ENCODE measurements at regions of chr7 and their contacts with region 1.

Region 1: DNA sequence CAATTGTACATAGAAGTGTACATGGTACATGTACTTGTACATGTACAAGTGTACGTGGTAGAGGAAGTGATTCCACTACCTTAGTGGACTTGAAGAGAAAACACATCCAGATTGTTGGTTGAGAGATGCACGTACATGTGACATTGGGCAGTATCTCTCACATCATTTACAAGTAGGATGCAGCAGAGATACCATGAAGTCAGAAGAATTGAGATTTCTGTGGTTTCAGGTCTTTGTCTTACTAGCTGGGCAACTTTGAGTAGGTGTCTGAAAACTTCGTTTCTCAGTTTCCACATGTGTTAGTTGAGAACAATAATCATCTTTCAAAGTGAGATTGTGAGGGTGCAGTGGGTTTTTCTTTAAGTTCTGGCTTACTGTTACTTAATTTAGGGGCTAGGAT is 21.5 kb downstream of the CLDN12 start:
- DNase-seq: no peak
- H3K4me3 Mint-ChIP-seq: peak overlapping the region; percentile 26
- H3K27ac Mint-ChIP-seq: peak overlapping the region; percentile 61
- H3K4me1 Mint-ChIP-seq: peaks cover 18% of the 10 kb centered on the region
- H3K27me3 Mint-ChIP-seq: no peaks in the 10 kb centered on the region

Region 2: GRCh38 chr7:90155206-90155605 is 269.5 kb before region 1 on chr7:
- intact Hi-C with region 1: loop called (anchors 1 kb)
- DNase-seq: no peak
- H3K4me3 Mint-ChIP-seq: peak overlapping the region; percentile 67
- H3K27ac Mint-ChIP-seq: no peak overlapping the region
- H3K4me1 Mint-ChIP-seq: peaks cover 4% of the 10 kb centered on the region
- H3K27me3 Mint-ChIP-seq: peaks cover 22% of the 10 kb centered on the region

Region 3: GRCh38 chr7:90262438-90262837 is 162.3 kb before region 1 on chr7:
- intact Hi-C with region 1: loop called (anchors 2 kb)
- DNase-seq: no peak
- H3K4me3 Mint-ChIP-seq: no peak overlapping the region
- H3K27ac Mint-ChIP-seq: no peak overlapping the region
- H3K4me1 Mint-ChIP-seq: no peaks in the 10 kb centered on the region
- H3K27me3 Mint-ChIP-seq: peaks cover 9% of the 10 kb centered on the region

Region 4: DNA sequence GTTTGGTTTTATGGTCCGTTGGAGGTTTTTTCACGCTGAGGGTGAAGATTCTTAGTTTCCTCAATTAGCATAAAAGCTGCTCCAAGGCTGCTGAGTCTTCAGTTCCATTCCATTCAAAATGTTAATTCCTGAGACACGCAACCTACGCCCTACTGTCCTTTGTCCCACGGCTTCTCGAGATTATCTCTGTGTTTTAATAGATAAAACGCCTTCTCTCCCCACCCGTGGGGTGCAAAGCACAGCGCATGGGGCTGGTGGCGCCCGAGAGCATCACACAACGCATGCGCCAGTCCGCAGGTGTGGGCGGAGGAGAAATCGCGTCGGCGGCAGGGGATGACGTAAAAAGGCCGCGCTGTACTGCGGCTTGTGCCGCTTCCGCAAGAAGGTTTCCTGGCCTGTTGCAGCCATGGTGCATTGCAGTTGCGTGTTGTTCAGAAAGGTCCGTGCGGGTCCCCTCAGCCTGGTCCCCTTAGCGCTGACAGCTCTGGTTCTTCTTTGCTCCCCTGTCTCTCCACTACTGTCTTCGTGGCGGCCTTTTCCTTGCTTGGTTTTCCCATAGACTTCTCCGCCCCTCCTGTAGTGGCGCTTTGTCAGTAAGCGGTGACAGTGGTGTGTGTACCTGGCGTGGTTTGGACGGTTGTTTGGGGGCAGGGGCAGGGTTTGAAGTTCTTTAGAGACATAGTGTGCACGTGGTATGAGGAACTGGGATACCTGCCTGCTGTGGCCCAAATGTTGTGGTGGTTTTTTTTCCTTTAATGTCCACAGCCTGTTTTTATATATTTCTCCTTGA is 78.2 kb before region 1 on chr7 and contains the start of gene GTPBP10:
- intact Hi-C with region 1: loop called (anchors 2 kb)
- DNase-seq: peak; percentile 98
- H3K4me3 Mint-ChIP-seq: peak within 1 kb of the TSS; percentile 97
- H3K27ac Mint-ChIP-seq: peak within 1 kb of the TSS; percentile 99
- H3K4me1 Mint-ChIP-seq: peaks cover 31% of the 10 kb centered on the region
- H3K27me3 Mint-ChIP-seq: peaks cover 2% of the 10 kb centered on the region
- total RNA-seq, gene GTPBP10: 37.1 and 37.7 TPM in 2 replicates